ENCODE measurements at regions of chr11 and their contacts with region 1.

Region 1: GRCh38 chr11:88179141-88179540 is 3.9 kb upstream of the RAB38 start:
- DNase-seq: no peak
- H3K4me3 ChIP-seq: no peak overlapping the region
- H3K27me3 ChIP-seq: 0 out of 2 replicates have a peak, but pooled peaks cover 2% of the 10 kb centered on the region
- CTCF ChIP-seq: no peak

Region 2: GRCh38 chr11:88070437-88070836 is 108.7 kb before region 1 on chr11:
- CTCF ChIA-PET with region 1: no interaction called
- POLR2A ChIA-PET with region 1: interaction called, 13 read pairs
- DNase-seq: no peak
- H3K4me3 ChIP-seq: no peak overlapping the region
- H3K27me3 ChIP-seq: no peaks in the 10 kb centered on the region
- CTCF ChIP-seq: no peak